ENCODE measurements at regions of chr1 and their contacts with region 1.

Region 1: GRCh38 chr1:182889997-182890396 is 50.9 kb downstream of the DHX9 start:
- DNase-seq: no peak
- ATAC-seq: no peak; the same call in 1 of the 2 replicates
- H3K4me3 ChIP-seq: no peak overlapping the region
- H3K27ac ChIP-seq: no peak overlapping the region
- H3K4me1 ChIP-seq: peaks cover 2% of the 10 kb centered on the region; the same call in 1 of the 2 replicates
- H3K27me3 ChIP-seq: no peaks in the 10 kb centered on the region
- CTCF ChIP-seq: no peak
- POLR2A ChIP-seq: no peak
- RAD21 ChIP-seq: no peak

Region 2: GRCh38 chr1:182649041-182649440 is 241.0 kb before region 1 on chr1:
- CTCF ChIA-PET with region 1: no interaction called
- POLR2A ChIA-PET with region 1: no interaction called
- dilution Hi-C with region 1: no loop called
- in situ Hi-C with region 1: no loop called
- intact Hi-C with region 1: no loop called
- DNase-seq: no peak
- ATAC-seq: no peak
- H3K4me3 ChIP-seq: no peak overlapping the region
- H3K27ac ChIP-seq: no peak overlapping the region
- H3K4me1 ChIP-seq: no peaks in the 10 kb centered on the region
- H3K27me3 ChIP-seq: peaks cover 7% of the 10 kb centered on the region
- CTCF ChIP-seq: no peak
- POLR2A ChIP-seq: no peak
- RAD21 ChIP-seq: no peak

Region 3: DNA sequence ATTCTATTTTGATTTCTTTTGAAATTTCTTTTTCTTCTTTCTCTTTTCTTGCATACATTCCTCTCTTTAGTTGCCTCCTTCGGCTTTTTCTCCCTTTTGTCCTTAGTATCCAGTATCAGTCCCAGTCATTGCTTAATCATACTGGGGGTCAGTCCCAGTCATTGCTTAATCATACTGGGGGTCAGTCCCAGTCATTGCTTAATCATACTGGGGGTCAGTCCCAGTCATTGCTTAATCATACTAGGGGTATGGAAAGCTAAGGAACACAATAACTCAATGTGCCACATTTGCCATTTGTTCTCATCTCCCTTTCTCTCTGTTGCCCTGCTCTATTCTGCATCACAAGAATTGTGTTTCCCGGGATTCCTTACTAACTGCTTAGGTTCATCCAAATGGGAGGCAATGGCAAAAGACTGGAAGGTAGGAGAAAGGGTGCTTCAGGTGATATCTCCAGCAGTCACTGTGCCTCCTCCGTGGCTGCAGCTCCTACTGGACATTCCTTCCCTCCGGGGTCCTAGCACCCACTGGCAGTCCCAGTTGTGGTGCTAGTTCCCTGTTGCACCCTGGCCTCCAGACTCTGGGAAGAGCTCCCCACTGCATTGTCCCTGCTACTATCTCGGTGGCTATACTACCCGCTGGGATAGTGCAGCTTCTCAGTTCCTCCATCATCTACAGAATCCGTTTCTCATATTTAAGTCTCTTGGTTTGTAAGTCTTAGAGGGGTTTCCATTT is 100.6 kb after region 1 on chr1:
- CTCF ChIA-PET with region 1: no interaction called
- POLR2A ChIA-PET with region 1: no interaction called
- dilution Hi-C with region 1: no loop called
- in situ Hi-C with region 1: no loop called
- intact Hi-C with region 1: no loop called
- DNase-seq: peak; percentile 78
- ATAC-seq: peak; percentile 87
- H3K4me3 ChIP-seq: no peak overlapping the region
- H3K27ac ChIP-seq: peak overlapping the region; percentile 51
- H3K4me1 ChIP-seq: peaks cover 7% of the 10 kb centered on the region
- H3K27me3 ChIP-seq: no peaks in the 10 kb centered on the region
- CTCF ChIP-seq: no peak
- POLR2A ChIP-seq: no peak
- RAD21 ChIP-seq: no peak

Region 4: DNA sequence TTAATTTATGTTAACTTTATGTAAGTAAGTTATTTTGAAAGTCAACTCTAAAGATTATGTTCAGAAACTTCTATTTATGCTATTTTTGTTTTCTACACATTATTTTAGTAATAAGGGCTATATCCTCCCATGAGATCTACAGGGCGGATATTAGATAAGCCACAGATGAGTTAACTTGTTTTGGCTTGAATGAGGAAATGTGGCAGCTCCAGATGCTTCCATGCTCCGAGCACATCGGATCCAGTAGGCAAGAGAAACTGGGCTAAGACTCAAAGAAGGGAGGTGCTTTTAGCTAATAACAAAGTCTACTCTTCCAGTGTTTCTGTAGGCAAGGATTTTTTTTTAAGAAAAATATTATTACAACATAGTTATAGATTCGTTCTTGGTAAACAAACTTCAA is 113.2 kb after region 1 on chr1:
- CTCF ChIA-PET with region 1: no interaction called
- POLR2A ChIA-PET with region 1: no interaction called
- dilution Hi-C with region 1: no loop called
- in situ Hi-C with region 1: no loop called
- intact Hi-C with region 1: no loop called
- DNase-seq: peak; percentile 40
- ATAC-seq: no peak
- H3K4me3 ChIP-seq: no peak overlapping the region
- H3K27ac ChIP-seq: no peak overlapping the region
- H3K4me1 ChIP-seq: peaks cover 1% of the 10 kb centered on the region; the same call in 1 of the 2 replicates
- H3K27me3 ChIP-seq: no peaks in the 10 kb centered on the region
- CTCF ChIP-seq: no peak
- POLR2A ChIP-seq: no peak
- RAD21 ChIP-seq: no peak

Region 5: DNA sequence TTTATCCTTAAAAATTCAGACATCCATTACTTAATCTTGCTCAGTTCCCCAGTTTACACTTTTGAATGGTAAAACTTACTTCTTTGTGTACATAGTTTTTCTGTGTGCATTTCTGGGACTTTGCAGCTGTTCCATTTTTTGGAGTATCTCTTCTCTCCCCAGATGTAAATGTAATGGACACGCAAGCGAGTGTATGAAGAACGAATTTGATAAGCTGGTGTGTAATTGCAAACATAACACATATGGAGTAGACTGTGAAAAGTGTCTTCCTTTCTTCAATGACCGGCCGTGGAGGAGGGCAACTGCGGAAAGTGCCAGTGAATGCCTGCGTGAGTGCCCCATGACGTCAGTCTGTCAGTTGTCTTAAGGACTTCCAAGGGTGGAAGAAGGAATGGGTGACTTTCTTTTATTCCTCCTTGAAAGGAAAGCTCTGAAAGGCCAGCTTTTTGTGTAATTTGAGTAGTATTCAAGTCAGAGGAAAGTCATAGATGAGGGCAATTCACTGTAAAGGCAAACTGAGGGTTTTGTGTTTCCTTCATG is 220.4 kb after region 1 on chr1:
- CTCF ChIA-PET with region 1: no interaction called
- POLR2A ChIA-PET with region 1: no interaction called
- dilution Hi-C with region 1: no loop called
- in situ Hi-C with region 1: loop called (anchors 10 kb)
- intact Hi-C with region 1: no loop called
- DNase-seq: no peak
- ATAC-seq: no peak
- H3K4me3 ChIP-seq: no peak overlapping the region
- H3K27ac ChIP-seq: no peak overlapping the region
- H3K4me1 ChIP-seq: peaks cover 12% of the 10 kb centered on the region
- H3K27me3 ChIP-seq: no peaks in the 10 kb centered on the region
- CTCF ChIP-seq: no peak
- POLR2A ChIP-seq: no peak
- RAD21 ChIP-seq: no peak

Region 6: GRCh38 chr1:183124259-183124658 is 234.3 kb after region 1 on chr1:
- CTCF ChIA-PET with region 1: no interaction called
- POLR2A ChIA-PET with region 1: no interaction called
- dilution Hi-C with region 1: no loop called
- in situ Hi-C with region 1: loop called (anchors 10 kb)
- intact Hi-C with region 1: loop called (anchors 10 kb)
- DNase-seq: no peak
- ATAC-seq: no peak
- H3K4me3 ChIP-seq: no peak overlapping the region
- H3K27ac ChIP-seq: no peak overlapping the region
- H3K4me1 ChIP-seq: peaks cover 10% of the 10 kb centered on the region
- H3K27me3 ChIP-seq: no peaks in the 10 kb centered on the region
- CTCF ChIP-seq: no peak
- POLR2A ChIP-seq: no peak
- RAD21 ChIP-seq: no peak

Region 7: DNA sequence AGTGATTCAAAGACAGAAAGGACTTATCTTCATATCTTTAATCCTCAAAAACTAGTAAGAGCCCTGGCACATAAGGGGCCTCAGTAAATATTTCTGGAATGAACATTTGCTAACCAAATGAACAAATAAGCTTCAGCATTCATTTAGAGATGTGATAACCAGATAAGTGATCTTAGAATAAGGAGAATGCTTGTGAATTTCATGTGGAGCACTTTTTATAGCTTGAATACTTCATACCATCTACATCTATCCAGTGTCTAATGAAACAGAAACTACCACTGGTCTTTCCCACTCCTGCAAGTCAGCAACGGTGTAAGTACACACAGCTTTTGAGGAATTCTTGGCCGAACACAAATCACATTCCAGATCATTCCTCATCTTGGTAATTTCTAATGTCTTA is 1826.2 kb after region 1 on chr1:
- CTCF ChIA-PET with region 1: no interaction called
- POLR2A ChIA-PET with region 1: no interaction called
- dilution Hi-C with region 1: no loop called
- in situ Hi-C with region 1: loop called (anchors 25 kb)
- intact Hi-C with region 1: no loop called
- DNase-seq: peak; percentile 5
- ATAC-seq: peak; percentile 68
- H3K4me3 ChIP-seq: no peak overlapping the region
- H3K27ac ChIP-seq: no peak overlapping the region
- H3K4me1 ChIP-seq: no peaks in the 10 kb centered on the region
- H3K27me3 ChIP-seq: no peaks in the 10 kb centered on the region
- CTCF ChIP-seq: no peak
- POLR2A ChIP-seq: no peak
- RAD21 ChIP-seq: no peak

Measured in IMR-90 (cell line).